ENCODE measurements at regions of chr3 and their contacts with region 1.

Region 1: DNA sequence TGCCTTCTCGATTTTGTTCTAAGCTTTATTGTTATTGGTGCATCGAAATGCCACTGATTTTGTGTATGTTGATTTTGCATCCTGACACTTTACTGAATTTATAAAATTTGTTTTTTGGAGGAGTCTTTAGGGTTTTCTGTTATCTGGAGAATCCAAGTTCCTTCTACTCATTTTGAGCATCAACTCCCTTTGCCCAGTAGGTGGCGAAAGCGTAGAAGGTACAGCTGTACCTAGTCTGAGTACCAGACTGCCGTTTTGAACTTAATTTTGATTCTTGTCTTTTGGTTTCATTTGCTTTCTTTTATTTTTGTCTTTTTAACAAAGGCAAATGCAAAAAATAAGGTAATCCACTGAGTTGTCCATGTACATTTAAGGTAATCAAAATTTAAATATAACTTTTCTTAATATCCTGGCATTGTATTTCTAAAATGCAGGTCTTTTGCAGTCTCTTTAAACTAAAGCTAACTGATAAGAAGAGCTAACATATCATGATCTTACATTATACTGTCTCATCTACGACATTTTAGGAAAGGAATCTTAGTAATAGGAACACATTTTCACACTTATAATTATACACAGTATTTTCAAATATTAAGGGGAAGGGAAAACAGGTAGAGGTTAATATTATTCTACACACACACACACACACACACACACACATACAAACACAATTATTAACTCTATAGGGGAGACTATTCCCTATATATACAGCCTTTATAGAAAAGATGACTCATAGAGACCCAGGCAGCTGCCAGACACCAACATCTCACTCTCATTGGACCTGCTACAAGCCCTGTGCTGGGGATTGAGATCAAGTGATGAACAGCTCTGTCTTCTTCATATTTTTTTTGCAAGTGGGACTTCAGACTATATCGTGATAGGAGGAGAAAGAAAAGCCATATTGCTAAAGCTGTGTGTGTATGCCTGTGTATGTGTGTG is 71.7 kb downstream of the SYNPR start:
- DNase-seq: no peak
- H3K4me3 Mint-ChIP-seq: no peak overlapping the region
- H3K27ac Mint-ChIP-seq: no peak overlapping the region
- H3K4me1 Mint-ChIP-seq: no peaks in the 10 kb centered on the region
- H3K27me3 Mint-ChIP-seq: peaks cover 11% of the 10 kb centered on the region

Region 2: DNA sequence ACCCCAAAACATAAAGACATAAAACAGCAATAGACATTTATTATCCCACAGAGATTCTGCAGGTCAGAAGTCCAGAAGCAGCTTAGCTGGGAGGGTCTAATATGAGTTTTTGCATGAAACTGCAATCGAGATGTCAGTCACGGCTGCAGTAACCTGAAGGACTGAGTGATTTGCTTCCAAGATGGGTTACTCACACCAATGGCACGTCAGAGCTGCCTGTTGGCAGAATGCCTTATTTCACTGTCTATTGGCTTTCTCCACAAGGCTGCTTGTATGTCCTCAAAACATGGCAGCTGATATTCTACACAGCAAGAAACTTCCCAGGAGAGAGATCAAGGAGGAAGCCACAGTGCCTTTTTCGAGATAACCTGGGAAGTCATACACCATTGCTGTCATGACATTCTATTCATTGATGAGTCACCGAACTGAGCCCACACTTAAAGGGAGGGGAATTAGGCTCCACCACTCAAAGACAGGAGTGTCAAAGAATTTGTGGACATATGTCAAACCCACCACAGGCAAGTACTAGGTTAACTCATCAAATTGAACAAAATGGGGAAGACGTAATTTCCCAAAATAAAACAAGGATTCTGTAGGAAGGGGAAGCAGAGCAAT is 50.5 kb after region 1 on chr3:
- intact Hi-C with region 1: no loop called
- DNase-seq: no peak
- H3K4me3 Mint-ChIP-seq: no peak overlapping the region
- H3K27ac Mint-ChIP-seq: no peak overlapping the region
- H3K4me1 Mint-ChIP-seq: no peaks in the 10 kb centered on the region
- H3K27me3 Mint-ChIP-seq: no peaks in the 10 kb centered on the region

Region 3: DNA sequence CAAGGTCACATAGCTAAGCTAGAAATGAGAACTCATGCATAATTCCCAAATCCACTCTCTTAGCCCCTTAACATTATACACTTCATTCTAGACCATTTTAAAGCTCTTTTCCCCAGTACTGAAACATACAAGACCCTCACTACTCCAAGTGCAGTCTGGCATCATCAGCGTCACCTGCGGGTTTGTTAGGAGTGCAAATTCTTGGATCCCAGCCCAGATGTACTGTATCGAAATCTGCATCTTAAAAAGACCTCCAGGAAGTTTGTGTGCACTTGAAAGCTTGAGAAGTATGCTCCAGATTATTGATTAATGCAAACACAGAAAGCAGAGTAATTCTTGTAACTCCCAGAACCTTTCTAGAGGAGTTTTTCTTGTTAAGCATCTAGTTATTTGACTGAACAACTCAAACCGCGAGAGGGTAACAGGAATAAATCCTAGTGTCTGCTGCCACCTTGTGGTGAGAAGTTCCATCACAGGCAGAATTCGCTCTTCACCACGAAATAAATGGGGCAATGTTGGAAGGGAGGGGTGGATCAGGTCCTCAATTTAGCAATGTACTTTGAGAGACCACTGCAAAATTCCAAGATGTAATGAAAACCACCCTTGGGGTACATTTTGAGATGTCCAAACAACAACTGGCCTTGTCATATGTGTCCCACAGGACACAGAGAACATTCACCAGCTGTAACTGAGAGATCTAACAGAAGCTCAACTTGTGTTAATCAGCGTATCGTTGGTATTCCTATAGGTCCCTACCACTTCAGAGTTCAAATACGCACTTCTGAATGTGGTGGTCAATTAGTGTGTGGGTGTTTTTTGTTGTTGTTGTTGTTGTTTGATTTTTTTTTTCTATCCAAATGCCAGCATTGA is 468.7 kb after region 1 on chr3:
- intact Hi-C with region 1: loop called (anchors 1 kb)
- DNase-seq: peak; percentile 34
- H3K4me3 Mint-ChIP-seq: no peak overlapping the region
- H3K27ac Mint-ChIP-seq: no peak overlapping the region
- H3K4me1 Mint-ChIP-seq: no peaks in the 10 kb centered on the region
- H3K27me3 Mint-ChIP-seq: no peaks in the 10 kb centered on the region

Region 4: DNA sequence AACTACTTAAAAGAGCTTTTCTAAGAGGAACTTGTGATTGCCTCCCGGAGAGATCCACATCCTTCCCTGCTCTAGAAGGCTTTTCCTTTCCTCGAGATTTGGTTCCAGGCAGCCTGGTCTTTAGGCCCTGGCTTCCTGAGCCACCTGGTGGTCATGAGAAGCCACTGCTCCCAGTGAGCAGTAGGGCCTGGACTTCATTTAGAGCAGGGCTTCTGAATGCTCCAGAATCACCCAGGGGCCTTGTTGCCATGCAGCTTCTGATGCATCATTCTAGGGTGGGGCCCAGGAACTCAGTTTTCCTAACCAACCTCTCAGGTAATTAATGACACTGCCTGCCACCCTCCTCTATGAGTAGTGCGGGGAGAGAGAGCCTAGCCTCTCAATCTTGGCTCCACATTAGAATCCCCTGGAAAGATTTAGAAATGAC is 643.8 kb after region 1 on chr3:
- intact Hi-C with region 1: loop called (anchors 10 kb)
- DNase-seq: peak; percentile 32
- H3K4me3 Mint-ChIP-seq: no peak overlapping the region
- H3K27ac Mint-ChIP-seq: peak overlapping the region; percentile 35
- H3K4me1 Mint-ChIP-seq: peaks cover 30% of the 10 kb centered on the region
- H3K27me3 Mint-ChIP-seq: no peaks in the 10 kb centered on the region

Region 5: GRCh38 chr3:64023187-64023848 is 673.5 kb after region 1 on chr3 and contains the start of gene PSMD6:
- intact Hi-C with region 1: loop called (anchors 10 kb)
- DNase-seq: peak; percentile 93
- H3K4me3 Mint-ChIP-seq: peak within 1 kb of the TSS; percentile 81
- H3K27ac Mint-ChIP-seq: peak within 1 kb of the TSS; percentile 88
- H3K4me1 Mint-ChIP-seq: peaks cover 30% of the 10 kb centered on the region
- H3K27me3 Mint-ChIP-seq: peaks cover 12% of the 10 kb centered on the region
- total RNA-seq, gene PSMD6: 133 and 137 TPM in 2 replicates